CD4-positive, alpha-beta T cell (primary cell): ENCODE measurements at regions of chr11 and their contacts with region 1.

Region 1: DNA sequence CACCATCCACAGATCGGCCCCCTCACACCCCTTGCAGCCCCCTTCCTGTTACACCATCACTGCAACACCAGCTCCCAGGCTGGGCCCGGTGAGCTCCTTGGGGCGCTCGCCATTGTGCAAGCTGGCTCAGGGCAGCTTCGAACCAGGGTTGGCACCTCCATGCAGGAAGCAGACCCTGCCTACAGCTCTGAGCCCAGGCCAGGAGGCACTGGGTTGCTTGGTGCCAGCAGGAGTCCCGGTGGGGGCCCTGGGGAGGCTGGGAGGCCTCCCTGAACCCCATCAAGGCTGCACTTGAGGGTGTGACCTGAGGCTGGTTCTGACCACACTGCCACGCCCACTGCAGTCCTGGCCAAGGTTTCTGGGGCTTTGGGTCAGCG is 417.1 kb downstream of the CTTN start:
- DNase-seq: no peak
- ATAC-seq: no peak
- H3K4me3 ChIP-seq: no peak overlapping the region
- H3K4me3 Mint-ChIP-seq: no peak overlapping the region
- H3K27ac ChIP-seq: no peak overlapping the region
- H3K27ac Mint-ChIP-seq: no peak overlapping the region
- H3K4me1 ChIP-seq: no peaks in the 10 kb centered on the region
- H3K4me1 Mint-ChIP-seq: no peaks in the 10 kb centered on the region
- H3K27me3 ChIP-seq: peaks cover 0 to 2% of the 10 kb centered on the region in 2 experiments
- H3K27me3 Mint-ChIP-seq: peaks cover 3% of the 10 kb centered on the region
- CTCF ChIP-seq: no peak

Region 2: DNA sequence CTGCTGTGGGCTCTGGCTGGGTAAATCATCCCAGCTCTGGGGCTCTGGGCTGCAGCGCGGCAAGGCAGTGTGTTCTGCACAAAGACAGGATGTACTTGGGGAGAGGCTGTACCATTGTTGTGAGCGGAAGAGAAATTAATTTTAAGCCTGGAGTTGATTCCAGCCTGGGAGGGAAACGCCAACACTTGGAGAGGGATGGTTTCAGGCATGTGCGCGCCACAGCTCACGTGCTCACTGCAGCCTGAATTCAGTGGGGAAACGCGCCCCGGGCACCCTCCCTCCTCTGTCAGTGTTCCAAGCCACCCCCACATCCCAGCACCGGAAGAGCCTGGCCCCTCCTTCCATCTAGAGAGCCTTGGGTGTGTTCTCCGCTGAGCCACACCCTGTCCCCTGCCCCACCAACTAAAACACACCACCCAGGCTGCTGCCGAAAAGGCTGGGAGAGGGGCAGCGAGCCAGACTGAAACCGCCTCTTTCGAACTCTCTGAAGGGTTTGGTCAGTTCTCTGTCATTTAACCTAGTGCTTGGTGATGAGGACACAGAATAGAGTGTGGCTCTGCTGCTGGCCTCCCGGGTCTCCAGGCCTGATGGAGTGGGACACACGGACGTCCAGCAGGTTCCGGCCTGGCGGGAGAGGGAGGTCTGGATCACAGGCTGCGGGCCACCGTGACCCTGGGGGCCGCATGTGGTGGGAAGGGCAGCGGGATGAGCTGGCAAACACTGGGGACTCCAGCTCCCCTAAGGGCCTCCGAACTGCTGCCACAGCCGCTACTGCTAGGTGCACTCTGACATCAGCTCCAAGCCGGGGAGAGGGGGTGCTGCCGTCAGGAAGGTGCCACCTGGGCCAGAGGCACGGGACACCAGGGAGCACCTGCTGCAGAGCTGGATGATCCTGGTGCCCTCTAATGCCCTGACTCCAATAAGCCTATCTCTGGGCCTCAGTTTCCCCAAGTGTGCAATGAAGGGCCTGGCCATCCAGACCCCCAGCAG is 186.3 kb before region 1 on chr11:
- CTCF ChIA-PET with region 1: no interaction called
- POLR2A ChIA-PET with region 1: no interaction called
- intact Hi-C with region 1: no loop called
- DNase-seq: no peak
- ATAC-seq: no peak
- H3K4me3 ChIP-seq: no peak overlapping the region
- H3K4me3 Mint-ChIP-seq: no peak overlapping the region
- H3K27ac ChIP-seq: no peak overlapping the region
- H3K27ac Mint-ChIP-seq: no peak overlapping the region
- H3K4me1 ChIP-seq: no peaks in the 10 kb centered on the region
- H3K4me1 Mint-ChIP-seq: no peaks in the 10 kb centered on the region
- H3K27me3 ChIP-seq: no peaks in the 10 kb centered on the region
- H3K27me3 Mint-ChIP-seq: peaks cover 16% of the 10 kb centered on the region
- CTCF ChIP-seq: no peak

Region 3: GRCh38 chr11:70755410-70756161 is 59.9 kb before region 1 on chr11:
- CTCF ChIA-PET with region 1: no interaction called
- POLR2A ChIA-PET with region 1: no interaction called
- intact Hi-C with region 1: no loop called
- DNase-seq: peak; percentile 14 to 61 (median 34)
- ATAC-seq: peak; percentile 51
- H3K4me3 ChIP-seq: no peak overlapping the region
- H3K4me3 Mint-ChIP-seq: no peak overlapping the region
- H3K27ac ChIP-seq: no peak overlapping the region
- H3K27ac Mint-ChIP-seq: no peak overlapping the region
- H3K4me1 ChIP-seq: peaks cover 7% of the 10 kb centered on the region
- H3K4me1 Mint-ChIP-seq: no peaks in the 10 kb centered on the region
- H3K27me3 ChIP-seq: peaks cover 10 to 12% of the 10 kb centered on the region in 2 experiments
- H3K27me3 Mint-ChIP-seq: peaks cover 25% of the 10 kb centered on the region
- CTCF ChIP-seq: peak; percentile 67

Region 4: GRCh38 chr11:71454470-71455469 is 639.3 kb after region 1 on chr11:
- CTCF ChIA-PET with region 1: interaction called, 4 read pairs
- POLR2A ChIA-PET with region 1: no interaction called
- intact Hi-C with region 1: loop called (anchors 1 kb)
- DNase-seq: peak; percentile 12 to 76 (median 40)
- ATAC-seq: peak; percentile 34
- H3K4me3 ChIP-seq: no peak overlapping the region
- H3K4me3 Mint-ChIP-seq: peak overlapping the region; percentile 87
- H3K27ac ChIP-seq: no peak overlapping the region
- H3K27ac Mint-ChIP-seq: peak overlapping the region; percentile 95
- H3K4me1 ChIP-seq: peaks cover 37% of the 10 kb centered on the region
- H3K4me1 Mint-ChIP-seq: peaks cover 51% of the 10 kb centered on the region
- H3K27me3 ChIP-seq: no peaks in the 10 kb centered on the region
- H3K27me3 Mint-ChIP-seq: no peaks in the 10 kb centered on the region
- CTCF ChIP-seq: peak; percentile 60